A549 (cell line): ENCODE measurements at regions of chr5 and their contacts with region 1.

Region 1: GRCh38 chr5:17189381-17190036 is 27.9 kb upstream of the BASP1 start:
- DNase-seq: peak; percentile 49 to 83
- ATAC-seq: peak; percentile 64 to 79
- H3K4me3 ChIP-seq: no peak overlapping the region
- H3K27ac ChIP-seq: peak overlapping the region; percentile 8 to 75; a peak in 5 of 6 replicates
- H3K4me1 ChIP-seq: peaks cover 51% of the 10 kb centered on the region
- CTCF ChIP-seq: peak; percentile 91
- EP300 ChIP-seq: no peak
- POLR2A ChIP-seq: no peak
- RAD21 ChIP-seq: peak; percentile 86 to 95

Region 2: DNA sequence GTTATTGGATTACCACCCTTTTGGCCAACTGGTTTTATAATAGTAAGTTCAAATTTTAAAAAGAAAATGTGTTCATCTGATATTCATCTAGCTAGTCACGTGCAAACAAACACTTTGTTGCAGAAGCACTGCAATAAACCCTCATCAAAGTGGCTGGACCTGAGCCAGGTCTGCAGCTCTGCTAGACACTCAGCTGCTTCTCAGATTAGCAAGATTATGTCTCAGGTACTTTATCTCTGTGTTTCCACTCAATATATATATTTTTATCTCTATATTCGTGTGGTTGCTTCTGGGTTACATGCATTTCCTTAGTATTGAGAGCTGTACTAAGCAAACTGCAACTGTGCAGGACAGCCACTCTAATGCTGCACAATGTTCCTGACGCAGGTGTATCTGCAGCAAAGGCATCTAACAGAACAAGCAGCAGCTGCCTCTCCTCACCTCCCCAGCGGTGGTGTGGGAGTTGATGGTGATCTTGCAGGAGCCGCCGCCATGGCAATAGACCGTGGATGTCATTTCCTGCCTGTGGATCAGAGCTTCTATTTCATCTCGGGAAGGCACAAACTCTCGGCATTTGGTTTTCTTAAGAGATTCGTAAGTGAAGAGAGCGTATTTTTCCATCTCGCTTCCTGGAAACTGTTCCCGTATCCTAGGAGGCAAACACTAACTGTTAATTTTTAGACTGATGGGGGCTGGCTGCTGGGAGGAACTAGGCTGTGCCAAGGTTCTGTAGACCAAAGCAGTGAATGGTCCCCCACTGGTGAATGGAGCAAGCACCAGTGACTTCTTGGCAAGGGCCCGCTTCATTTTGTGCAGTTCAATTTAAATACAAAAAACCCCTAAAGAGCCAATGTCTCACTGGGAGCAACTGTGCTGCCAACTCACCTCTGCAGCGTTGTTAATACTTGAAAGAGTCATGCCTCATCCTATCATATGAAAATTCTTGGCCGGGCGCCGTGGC is 516.0 kb before region 1 on chr5:
- CTCF ChIA-PET with region 1: interaction called, 10 read pairs
- POLR2A ChIA-PET with region 1: no interaction called
- DNase-seq: no peak
- ATAC-seq: no peak
- H3K4me3 ChIP-seq: no peak overlapping the region
- H3K27ac ChIP-seq: no peak overlapping the region
- H3K4me1 ChIP-seq: no peaks in the 10 kb centered on the region
- CTCF ChIP-seq: no peak
- EP300 ChIP-seq: no peak
- POLR2A ChIP-seq: no peak
- RAD21 ChIP-seq: no peak

Region 3: GRCh38 chr5:16776611-16777251 is 412.8 kb before region 1 on chr5:
- CTCF ChIA-PET with region 1: interaction called, 14 read pairs
- POLR2A ChIA-PET with region 1: no interaction called
- DNase-seq: peak in 1 of 2 experiments; percentile 54
- ATAC-seq: peak; percentile 72 to 83; a peak in 4 of 6 replicates
- H3K4me3 ChIP-seq: no peak overlapping the region
- H3K27ac ChIP-seq: peak overlapping the region in 1 of 2 experiments; percentile 1; a peak in 1 of 6 replicates
- H3K4me1 ChIP-seq: peaks cover 26% of the 10 kb centered on the region
- CTCF ChIP-seq: peak; percentile 20; the same call in 2 of the 3 replicates
- EP300 ChIP-seq: no peak
- POLR2A ChIP-seq: no peak
- RAD21 ChIP-seq: no peak

Region 4: GRCh38 chr5:16886366-16886736 is 303.2 kb before region 1 on chr5:
- CTCF ChIA-PET with region 1: interaction called, 12 read pairs
- POLR2A ChIA-PET with region 1: no interaction called
- DNase-seq: peak in 1 of 2 experiments; percentile 54
- ATAC-seq: peak; percentile 29 to 41; a peak in 4 of 6 replicates
- H3K4me3 ChIP-seq: no peak overlapping the region
- H3K27ac ChIP-seq: peak overlapping the region; percentile 95
- H3K4me1 ChIP-seq: peaks cover 95% of the 10 kb centered on the region
- CTCF ChIP-seq: no peak
- EP300 ChIP-seq: peak in 1 of 2 experiments; percentile 48; a peak in 1 of 5 replicates
- POLR2A ChIP-seq: no peak
- RAD21 ChIP-seq: no peak

Region 5: DNA sequence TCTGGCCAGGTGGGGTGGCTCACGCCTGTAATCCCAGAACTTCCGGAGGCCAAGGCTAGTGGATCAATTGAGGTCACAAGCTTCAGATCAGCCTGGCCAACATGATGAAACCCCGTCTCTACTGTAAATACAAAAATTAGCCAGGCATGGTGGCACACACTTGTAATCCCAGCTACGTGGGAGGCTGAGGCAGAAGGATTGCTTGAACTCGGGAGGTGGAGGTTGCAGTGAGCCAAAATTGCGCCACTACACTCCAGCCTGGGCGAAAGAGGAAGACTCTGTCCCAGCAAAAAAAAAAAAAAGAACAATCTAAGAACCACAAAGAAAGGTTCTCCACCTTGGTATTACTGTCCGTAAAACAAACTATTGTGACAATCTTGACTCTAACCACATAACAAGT is 263.1 kb before region 1 on chr5:
- CTCF ChIA-PET with region 1: interaction called, 41 read pairs
- POLR2A ChIA-PET with region 1: no interaction called
- DNase-seq: no peak
- ATAC-seq: no peak
- H3K4me3 ChIP-seq: no peak overlapping the region
- H3K27ac ChIP-seq: no peak overlapping the region
- H3K4me1 ChIP-seq: peaks cover 56% of the 10 kb centered on the region
- CTCF ChIP-seq: no peak
- EP300 ChIP-seq: no peak
- POLR2A ChIP-seq: no peak
- RAD21 ChIP-seq: no peak

Region 6: DNA sequence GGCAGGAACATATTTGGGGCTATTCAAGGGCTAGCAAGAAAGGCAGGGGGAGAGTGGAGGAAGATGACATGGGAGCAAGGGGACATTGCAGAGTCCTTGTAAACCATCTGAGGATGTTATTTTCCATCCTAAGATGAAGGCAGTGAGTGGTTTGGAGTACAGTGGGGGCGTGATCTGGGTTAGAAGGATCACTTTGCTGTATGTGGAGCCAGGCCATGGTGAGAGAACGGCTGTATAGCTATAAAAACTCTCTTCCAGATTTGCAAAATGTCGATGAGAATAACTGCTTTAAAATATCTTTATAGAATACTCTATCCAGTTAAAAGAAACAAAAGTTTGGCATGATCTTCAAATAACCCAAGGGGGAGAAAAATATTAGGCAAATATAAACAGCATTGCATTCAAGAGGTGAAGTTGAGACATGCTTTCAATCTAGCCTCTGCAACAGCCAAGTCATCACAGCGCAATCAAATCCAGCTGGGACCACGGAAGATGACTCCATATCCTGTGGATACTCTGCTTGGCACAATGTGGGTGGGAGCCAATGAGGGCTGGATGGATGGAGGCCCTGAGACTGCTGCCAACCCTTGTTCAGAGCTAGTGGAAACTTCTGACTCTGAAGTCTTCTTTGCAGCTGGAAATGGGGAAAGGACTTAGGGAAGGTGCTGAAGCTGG is 83.6 kb before region 1 on chr5:
- CTCF ChIA-PET with region 1: interaction called, 10 read pairs
- POLR2A ChIA-PET with region 1: no interaction called
- DNase-seq: no peak
- ATAC-seq: peak; percentile 30 to 61; a peak in 3 of 6 replicates
- H3K4me3 ChIP-seq: no peak overlapping the region
- H3K27ac ChIP-seq: peak overlapping the region in 1 of 2 experiments; percentile 28; a peak in 3 of 6 replicates
- H3K4me1 ChIP-seq: peaks cover 8% of the 10 kb centered on the region
- CTCF ChIP-seq: no peak
- EP300 ChIP-seq: no peak
- POLR2A ChIP-seq: no peak
- RAD21 ChIP-seq: no peak

Region 7: GRCh38 chr5:17169507-17169906 is 20.0 kb before region 1 on chr5:
- CTCF ChIA-PET with region 1: interaction called, 13 read pairs
- POLR2A ChIA-PET with region 1: no interaction called
- DNase-seq: no peak
- ATAC-seq: no peak
- H3K4me3 ChIP-seq: no peak overlapping the region
- H3K27ac ChIP-seq: peak overlapping the region in 1 of 2 experiments; percentile 45; a peak in 1 of 6 replicates
- H3K4me1 ChIP-seq: peaks cover 5% of the 10 kb centered on the region; the same call in 1 of the 3 replicates
- CTCF ChIP-seq: no peak
- EP300 ChIP-seq: no peak
- POLR2A ChIP-seq: no peak
- RAD21 ChIP-seq: no peak

Region 8: DNA sequence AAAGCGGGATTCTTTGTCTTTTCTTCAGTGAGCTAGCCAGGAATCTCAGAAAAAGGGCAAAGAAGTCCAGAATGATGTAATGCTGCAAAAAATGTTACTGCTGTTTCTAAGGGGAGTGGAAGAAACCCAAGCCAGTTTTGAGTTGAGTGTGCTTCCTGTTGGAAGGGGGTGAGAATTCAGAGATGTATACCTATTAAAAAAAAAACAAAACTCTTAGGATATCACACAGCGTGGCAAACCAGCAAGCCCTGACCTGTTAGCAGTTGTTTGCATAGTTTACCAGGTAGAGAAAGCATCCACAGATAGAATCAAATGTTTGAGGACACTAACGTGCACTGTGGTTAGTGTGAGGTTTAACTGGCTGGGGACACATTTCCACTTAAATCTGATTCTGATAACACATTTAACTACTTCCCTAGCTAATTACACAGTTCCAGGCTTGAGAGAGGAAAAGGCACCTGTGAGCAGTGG is 39.3 kb after region 1 on chr5:
- CTCF ChIA-PET with region 1: no interaction called
- POLR2A ChIA-PET with region 1: no interaction called
- DNase-seq: no peak
- ATAC-seq: no peak
- H3K4me3 ChIP-seq: no peak overlapping the region
- H3K27ac ChIP-seq: peak overlapping the region in 1 of 2 experiments; percentile 49; a peak in 2 of 6 replicates
- H3K4me1 ChIP-seq: peaks cover 97% of the 10 kb centered on the region
- CTCF ChIP-seq: no peak
- EP300 ChIP-seq: no peak
- POLR2A ChIP-seq: no peak
- RAD21 ChIP-seq: no peak